ENCODE measurements at regions of chr7 and their contacts with region 1.

Region 1: GRCh38 chr7:117119192-117119924 is 166.1 kb downstream of the ST7 start:
- DNase-seq: peak in 8 of 10 donors; percentile 51 to 86 (median 68)
- H3K4me3 ChIP-seq: no peak overlapping the region
- H3K27ac ChIP-seq: peak overlapping the region in 2 of 59 donors; percentile 23 to 95
- H3K27me3 ChIP-seq: no peaks in the 10 kb centered on the region
- CTCF ChIP-seq: peak; percentile 66 to 98 (median 88)

Region 2: DNA sequence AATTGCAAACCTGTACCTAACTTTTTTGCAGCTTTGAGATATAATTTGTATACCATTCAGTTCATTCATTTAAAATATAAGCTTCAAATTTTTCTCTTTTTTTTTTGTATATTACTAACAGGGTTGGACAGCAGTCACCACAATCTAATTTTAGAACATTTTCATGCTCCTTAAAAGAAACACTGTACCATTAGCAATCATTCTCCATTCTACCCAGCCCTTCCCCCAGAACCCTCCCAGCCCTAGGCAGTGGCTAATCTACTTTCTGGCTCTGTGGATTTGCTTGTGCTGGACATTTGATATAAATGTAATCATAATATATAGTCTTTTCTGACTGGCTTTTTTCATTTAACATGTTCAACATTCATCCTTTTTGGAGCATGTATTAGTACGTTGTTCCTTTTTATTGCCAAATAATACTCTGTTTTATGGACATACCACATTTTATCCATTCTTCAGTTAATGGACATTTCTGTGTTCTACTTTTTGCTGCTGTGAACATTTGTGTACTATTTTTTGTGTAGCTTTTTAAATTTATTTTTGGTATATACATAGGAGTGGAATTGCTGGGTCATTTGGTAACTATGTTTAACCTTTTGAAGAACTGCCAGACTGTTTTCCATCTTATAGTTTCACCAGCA is 207.0 kb before region 1 on chr7:
- intact Hi-C with region 1: no loop called
- DNase-seq: no peak
- H3K4me3 ChIP-seq: no peak overlapping the region
- H3K27ac ChIP-seq: no peak overlapping the region
- H3K27me3 ChIP-seq: no peaks in the 10 kb centered on the region
- CTCF ChIP-seq: no peak

Region 3: GRCh38 chr7:116929914-116930913 is 189.1 kb before region 1 on chr7:
- intact Hi-C with region 1: loop called (anchors 5 to 10 kb)
- DNase-seq: peak; percentile 81 to 92 (median 87)
- H3K4me3 ChIP-seq: peak overlapping the region in 36 of 59 donors; percentile 1 to 48 (median 25)
- H3K27ac ChIP-seq: no peak overlapping the region
- H3K27me3 ChIP-seq: no peaks in the 10 kb centered on the region
- CTCF ChIP-seq: peak; percentile 86 to 98 (median 94)

Region 4: GRCh38 chr7:116984917-116985316 is 134.4 kb before region 1 on chr7:
- intact Hi-C with region 1: loop called (anchors 2 to 5 kb)
- DNase-seq: no peak
- H3K4me3 ChIP-seq: no peak overlapping the region
- H3K27ac ChIP-seq: no peak overlapping the region
- H3K27me3 ChIP-seq: no peaks in the 10 kb centered on the region
- CTCF ChIP-seq: peak; percentile 58 to 89 (median 79)

Region 5: DNA sequence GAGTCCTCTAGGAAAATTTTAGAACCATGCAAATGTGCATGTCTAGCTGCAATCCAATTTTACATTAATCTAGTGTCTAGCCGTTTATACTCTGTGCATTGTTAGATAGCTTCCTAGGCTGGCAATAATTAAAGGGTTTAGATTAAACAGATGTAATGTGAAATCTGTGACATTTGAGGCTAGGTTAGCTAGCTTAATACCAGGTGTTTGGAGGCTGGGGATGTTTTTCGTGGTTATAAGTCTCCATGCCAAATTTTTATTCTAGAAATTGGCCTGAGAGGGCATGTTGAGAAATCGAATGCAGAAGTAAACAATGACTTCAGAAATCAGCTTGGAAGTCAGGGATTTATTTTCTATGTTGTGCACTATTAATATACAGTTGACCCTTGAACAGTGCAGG is 71.9 kb before region 1 on chr7:
- intact Hi-C with region 1: loop called in 1 of 2 experiments (anchors 2 kb)
- DNase-seq: no peak
- H3K4me3 ChIP-seq: no peak overlapping the region
- H3K27ac ChIP-seq: peak overlapping the region in 28 of 59 donors; percentile 0 to 74 (median 33)
- H3K27me3 ChIP-seq: no peaks in the 10 kb centered on the region
- CTCF ChIP-seq: no peak

Measured in dorsolateral prefrontal cortex (tissue), 120 donors.